Activated CD8-positive, alpha-beta T cell treated with anti-CD3 and anti-CD28 coated beads for 36 hours (primary cell): ENCODE measurements at regions of chr12 and their contacts with region 1.

Region 1: DNA sequence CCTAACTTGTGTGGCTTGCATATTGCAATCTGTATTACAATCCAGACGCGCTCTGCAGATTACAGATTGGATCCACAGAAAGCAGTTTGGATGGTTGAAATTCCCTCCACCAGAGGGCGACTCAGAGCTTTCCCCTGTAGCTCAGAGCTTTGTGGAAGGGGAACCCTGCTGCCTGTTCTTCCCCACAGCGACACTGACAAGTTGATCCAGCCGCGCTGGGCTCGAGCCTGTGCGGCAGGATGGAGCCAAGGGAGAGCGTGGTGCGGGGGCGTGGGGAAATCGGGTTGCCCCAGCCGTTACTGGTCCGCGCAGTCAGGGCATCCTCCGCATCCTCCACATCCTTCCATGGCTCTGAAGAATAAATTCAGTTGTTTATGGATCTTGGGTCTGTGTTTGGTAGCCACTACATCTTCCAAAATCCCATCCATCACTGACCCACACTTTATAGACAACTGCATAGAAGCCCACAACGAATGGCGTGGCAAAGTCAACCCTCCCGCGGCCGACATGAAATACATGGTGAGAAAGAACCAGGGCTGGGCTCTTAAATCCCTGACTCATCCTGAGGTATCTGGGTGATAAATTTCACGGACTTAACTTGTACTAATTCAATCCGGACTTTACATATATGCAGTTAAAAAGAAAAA is at the start of gene GLIPR1L1:
- DNase-seq: peak; percentile 92
- ATAC-seq: peak; percentile 72
- H3K4me3 Mint-ChIP-seq: peak within 1 kb of the TSS; percentile 65
- H3K27ac Mint-ChIP-seq: no peak within 1 kb of the TSS
- H3K4me1 Mint-ChIP-seq: peaks cover 26% of the 10 kb centered on the region
- H3K27me3 Mint-ChIP-seq: peaks cover 27% of the 10 kb centered on the region
- CTCF ChIP-seq: peak; percentile 80
- total RNA-seq, gene GLIPR1L1: not detected

Region 2: GRCh38 chr12:75315518-75315917 is 19.0 kb before region 1 on chr12:
- CTCF ChIA-PET with region 1: interaction called, 10 read pairs
- POLR2A ChIA-PET with region 1: no interaction called
- intact Hi-C with region 1: no loop called
- DNase-seq: no peak
- ATAC-seq: no peak
- H3K4me3 Mint-ChIP-seq: no peak overlapping the region
- H3K27ac Mint-ChIP-seq: no peak overlapping the region
- H3K4me1 Mint-ChIP-seq: no peaks in the 10 kb centered on the region
- H3K27me3 Mint-ChIP-seq: no peaks in the 10 kb centered on the region
- CTCF ChIP-seq: no peak

Region 3: GRCh38 chr12:75390899-75391538 is 56.5 kb after region 1 on chr12 and contains the start of gene GLIPR1L2:
- CTCF ChIA-PET with region 1: interaction called, 12 read pairs
- POLR2A ChIA-PET with region 1: no interaction called
- intact Hi-C with region 1: no loop called
- DNase-seq: peak; percentile 93
- ATAC-seq: peak; percentile 97
- H3K4me3 Mint-ChIP-seq: peak within 1 kb of the TSS; percentile 87
- H3K27ac Mint-ChIP-seq: peak within 1 kb of the TSS; percentile 95
- H3K4me1 Mint-ChIP-seq: peaks cover 36% of the 10 kb centered on the region
- H3K27me3 Mint-ChIP-seq: no peaks in the 10 kb centered on the region
- CTCF ChIP-seq: peak; percentile 67
- total RNA-seq, gene GLIPR1L2: 0.27 to 0.43 TPM

Region 4: GRCh38 chr12:75489613-75490210 is 155.2 kb after region 1 on chr12:
- CTCF ChIA-PET with region 1: interaction called, 24 read pairs
- POLR2A ChIA-PET with region 1: no interaction called
- intact Hi-C with region 1: loop called (anchors 5 kb)
- DNase-seq: peak; percentile 66
- ATAC-seq: peak; percentile 96
- H3K4me3 Mint-ChIP-seq: peak overlapping the region; percentile 0
- H3K27ac Mint-ChIP-seq: peak overlapping the region; percentile 85
- H3K4me1 Mint-ChIP-seq: peaks cover 39% of the 10 kb centered on the region
- H3K27me3 Mint-ChIP-seq: no peaks in the 10 kb centered on the region
- CTCF ChIP-seq: no peak

Region 5: DNA sequence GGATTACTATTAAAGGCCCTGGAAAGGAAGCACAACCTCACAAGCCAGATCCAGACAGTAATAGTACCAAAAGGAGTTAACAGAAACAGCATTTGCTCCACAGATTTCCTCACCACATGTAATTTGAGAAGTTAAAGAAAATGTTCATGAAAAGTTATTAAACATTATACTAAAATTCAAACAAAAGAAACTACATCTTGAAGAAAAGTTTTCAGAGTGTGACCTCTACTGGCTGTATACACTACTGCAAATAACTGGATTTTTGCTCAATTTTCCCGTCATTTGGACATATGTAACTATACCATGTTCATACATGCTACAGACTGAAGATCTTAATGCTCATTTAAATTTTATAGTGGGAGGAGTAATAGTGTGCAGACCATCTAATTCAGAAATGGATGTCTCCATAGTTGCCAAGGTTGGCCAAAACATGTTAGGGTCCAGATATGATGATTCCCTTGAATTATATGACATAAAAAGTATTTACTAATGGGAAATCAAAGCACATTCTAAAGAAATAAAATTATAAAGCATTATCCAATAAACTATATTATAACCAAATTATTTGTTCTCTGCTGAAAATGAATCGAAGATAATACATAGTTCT is 171.3 kb after region 1 on chr12:
- CTCF ChIA-PET with region 1: interaction called, 17 read pairs
- POLR2A ChIA-PET with region 1: no interaction called
- intact Hi-C with region 1: no loop called
- DNase-seq: no peak
- ATAC-seq: peak; percentile 70
- H3K4me3 Mint-ChIP-seq: no peak overlapping the region
- H3K27ac Mint-ChIP-seq: peak overlapping the region; percentile 57
- H3K4me1 Mint-ChIP-seq: peaks cover 35% of the 10 kb centered on the region
- H3K27me3 Mint-ChIP-seq: no peaks in the 10 kb centered on the region
- CTCF ChIP-seq: peak; percentile 74